Mammary epithelial cell (primary cell): ENCODE measurements at regions of chr14 and their contacts with region 1.

Region 1: GRCh38 chr14:31476131-31476866 is 11.5 kb downstream of the GPR33 start:
- DNase-seq: no peak
- H3K4me3 ChIP-seq: no peak overlapping the region
- H3K27ac ChIP-seq: no peak overlapping the region
- H3K4me1 ChIP-seq: no peaks in the 10 kb centered on the region
- H3K27me3 ChIP-seq: no peaks in the 10 kb centered on the region
- CTCF ChIP-seq: no peak

Region 2: GRCh38 chr14:31489691-31490090 is 13.4 kb after region 1 on chr14:
- CTCF ChIA-PET with region 1: interaction called, 15 read pairs
- dilution Hi-C with region 1: no loop called
- in situ Hi-C with region 1: no loop called
- intact Hi-C with region 1: no loop called
- DNase-seq: no peak
- H3K4me3 ChIP-seq: no peak overlapping the region
- H3K27ac ChIP-seq: no peak overlapping the region
- H3K4me1 ChIP-seq: no peaks in the 10 kb centered on the region
- H3K27me3 ChIP-seq: no peaks in the 10 kb centered on the region
- CTCF ChIP-seq: no peak